WTC11 (cell line): ENCODE measurements at regions of chrX and their contacts with region 1.

Region 1: DNA sequence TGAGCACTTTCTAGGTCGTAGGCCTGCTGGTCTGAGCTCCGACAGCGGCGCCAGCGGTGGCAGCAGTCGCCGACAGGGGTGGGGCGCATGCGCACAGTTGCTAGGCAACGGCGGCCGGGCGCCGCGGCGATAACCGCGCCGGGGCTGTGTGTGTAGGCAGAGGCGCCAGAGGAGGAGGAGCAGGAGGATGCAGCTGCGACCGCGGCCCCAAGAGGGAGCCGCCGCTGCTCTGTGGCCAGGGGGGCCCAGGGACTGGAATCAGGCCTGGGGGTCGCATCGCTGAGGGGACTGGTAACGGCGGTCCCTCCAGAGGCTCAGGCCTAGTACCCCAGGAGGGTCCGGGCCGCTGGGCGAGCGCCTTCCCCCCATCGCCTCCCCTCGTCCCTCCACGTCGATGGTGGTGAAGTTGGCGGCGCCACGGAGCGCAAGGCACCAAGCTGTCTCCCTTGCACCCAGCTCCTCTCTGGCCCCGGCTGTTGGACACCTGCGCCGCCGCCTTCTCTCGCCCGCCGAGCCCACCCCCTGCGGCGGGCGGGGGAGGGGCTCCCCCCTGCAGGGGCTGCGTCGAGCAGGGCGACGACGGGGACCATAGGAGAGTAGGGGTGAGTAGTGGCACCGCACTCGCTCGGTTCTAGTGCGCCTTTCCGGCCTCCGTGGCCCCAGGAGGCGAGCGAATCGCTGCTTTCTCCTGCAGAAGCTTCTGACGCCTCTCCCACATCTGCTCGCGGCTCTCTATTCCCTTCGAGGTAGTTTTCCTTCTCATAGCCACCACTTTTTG is 58.6 kb upstream of the ZC4H2 start:
- DNase-seq: peak; percentile 85
- ATAC-seq: peak; percentile 97
- H3K4me3 Mint-ChIP-seq: peak within 1 kb of the TSS; percentile 86
- H3K27ac Mint-ChIP-seq: peak within 1 kb of the TSS; percentile 57
- H3K4me1 Mint-ChIP-seq: peaks cover 6% of the 10 kb centered on the region
- H3K27me3 Mint-ChIP-seq: no peaks in the 10 kb centered on the region
- CTCF ChIP-seq: no peak

Region 2: GRCh38 chrX:64580035-64580434 is 454.8 kb before region 1 on chrX:
- CTCF ChIA-PET with region 1: no interaction called
- POLR2A ChIA-PET with region 1: no interaction called
- DNase-seq: peak; percentile 21
- ATAC-seq: peak; percentile 67
- H3K4me3 Mint-ChIP-seq: no peak overlapping the region
- H3K27ac Mint-ChIP-seq: no peak overlapping the region
- H3K4me1 Mint-ChIP-seq: peaks cover 13% of the 10 kb centered on the region
- H3K27me3 Mint-ChIP-seq: no peaks in the 10 kb centered on the region; the same call in 1 of the 2 replicates
- CTCF ChIP-seq: no peak

Region 3: DNA sequence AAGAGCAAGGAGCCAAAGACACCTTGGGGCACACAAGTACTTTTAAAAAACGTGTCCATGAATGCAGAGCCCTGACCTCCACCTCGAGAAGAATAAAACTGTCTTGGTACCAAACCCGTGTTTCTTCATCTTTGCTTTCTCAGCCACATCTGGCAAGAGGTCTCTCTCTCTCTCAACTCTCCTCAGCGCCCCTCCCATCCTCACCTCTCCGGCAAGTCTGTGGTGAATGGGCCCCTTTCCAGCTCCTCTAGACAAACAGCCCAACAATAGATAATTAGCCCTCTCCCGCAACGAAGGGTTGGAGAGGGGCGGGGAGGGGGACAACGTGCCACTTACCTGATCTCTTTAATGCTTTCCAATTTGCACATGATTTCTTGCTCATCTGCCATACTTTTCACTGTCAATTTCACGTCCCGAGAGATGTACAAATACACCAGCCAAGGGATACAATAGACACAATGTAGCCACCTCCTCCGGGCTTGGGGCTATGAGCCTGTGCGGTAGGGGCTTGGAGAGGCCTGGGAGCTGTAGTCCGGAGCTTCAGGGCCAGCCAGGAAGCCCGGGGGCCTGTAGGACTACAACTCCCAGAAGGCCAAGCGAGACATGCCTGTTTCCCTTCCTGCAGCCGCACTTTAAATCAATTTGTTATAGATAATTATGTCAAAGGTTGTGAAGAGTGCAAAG is 58.7 kb before region 1 on chrX and contains the start of gene ZC4H2:
- CTCF ChIA-PET with region 1: interaction called, 6 read pairs
- POLR2A ChIA-PET with region 1: interaction called, 12 read pairs
- DNase-seq: peak; percentile 71
- ATAC-seq: peak; percentile 99
- H3K4me3 Mint-ChIP-seq: peak within 1 kb of the TSS; percentile 96
- H3K27ac Mint-ChIP-seq: peak within 1 kb of the TSS; percentile 84; the same call in 1 of the 2 replicates
- H3K4me1 Mint-ChIP-seq: peaks cover 10% of the 10 kb centered on the region
- H3K27me3 Mint-ChIP-seq: no peaks in the 10 kb centered on the region
- CTCF ChIP-seq: no peak
- total RNA-seq, gene ZC4H2: 23.7 to 25.7 TPM (median 25.2 TPM) in 3 replicates

Region 4: GRCh38 chrX:65196758-65197360 is 162.0 kb after region 1 on chrX:
- CTCF ChIA-PET with region 1: interaction called, 19 read pairs
- POLR2A ChIA-PET with region 1: interaction called, 7 read pairs
- DNase-seq: peak; percentile 70
- ATAC-seq: peak; percentile 98
- H3K4me3 Mint-ChIP-seq: peak overlapping the region; percentile 57
- H3K27ac Mint-ChIP-seq: peak overlapping the region; percentile 63
- H3K4me1 Mint-ChIP-seq: peaks cover 33% of the 10 kb centered on the region
- H3K27me3 Mint-ChIP-seq: no peaks in the 10 kb centered on the region; the same call in 1 of the 2 replicates
- CTCF ChIP-seq: no peak

Region 5: GRCh38 chrX:65300104-65300809 is 265.4 kb after region 1 on chrX:
- CTCF ChIA-PET with region 1: interaction called, 18 read pairs
- POLR2A ChIA-PET with region 1: interaction called, 7 read pairs
- DNase-seq: peak; percentile 59
- ATAC-seq: peak; percentile 96
- H3K4me3 Mint-ChIP-seq: 0 out of 2 replicates have a peak overlapping the region, but pooled peaks have one; percentile 2
- H3K27ac Mint-ChIP-seq: peak overlapping the region; percentile 96
- H3K4me1 Mint-ChIP-seq: peaks cover 11% of the 10 kb centered on the region
- H3K27me3 Mint-ChIP-seq: no peaks in the 10 kb centered on the region
- CTCF ChIP-seq: no peak